ENCODE measurements at regions of chr5 and their contacts with region 1.

Region 1: DNA sequence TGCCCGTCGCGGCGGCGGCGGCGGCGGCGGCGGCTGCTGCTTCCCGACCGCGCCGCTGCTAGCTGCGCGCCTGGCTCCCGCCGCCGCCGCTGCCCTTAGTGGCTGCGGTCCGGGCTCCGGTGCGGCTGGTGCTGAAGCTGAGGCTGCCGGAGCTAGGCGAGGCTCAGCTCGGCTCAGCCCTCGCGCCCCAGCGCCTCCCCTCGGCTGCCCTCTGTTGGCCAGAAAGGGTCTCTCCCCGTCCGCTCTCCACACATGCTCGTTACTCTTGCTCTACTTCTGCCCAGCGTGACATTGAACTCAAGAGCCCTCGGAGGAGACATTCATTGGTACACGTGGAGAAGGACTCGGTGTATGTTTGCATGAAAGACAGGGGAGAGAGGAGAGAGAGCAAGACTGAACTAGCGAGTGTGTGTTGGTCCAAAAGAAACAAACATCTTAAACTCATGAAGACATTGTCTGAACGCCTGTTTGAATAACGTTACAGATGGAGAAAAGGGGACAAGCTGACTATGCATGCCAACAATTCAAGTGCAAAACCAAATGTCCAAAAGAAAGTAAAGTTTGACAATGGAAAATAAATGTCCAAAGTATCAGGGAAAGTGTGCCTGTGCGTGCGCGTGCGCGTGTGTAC is at the start of gene HCN1:
- DNase-seq: peak; percentile 52
- H3K4me3 ChIP-seq: no peak within 1 kb of the TSS
- H3K27ac ChIP-seq: no peak within 1 kb of the TSS
- H3K4me1 ChIP-seq: no peaks in the 10 kb centered on the region
- H3K27me3 ChIP-seq: peaks cover 5% of the 10 kb centered on the region
- CTCF ChIP-seq: peak; percentile 50 to 72
- total RNA-seq, gene HCN1: not detected

Region 2: DNA sequence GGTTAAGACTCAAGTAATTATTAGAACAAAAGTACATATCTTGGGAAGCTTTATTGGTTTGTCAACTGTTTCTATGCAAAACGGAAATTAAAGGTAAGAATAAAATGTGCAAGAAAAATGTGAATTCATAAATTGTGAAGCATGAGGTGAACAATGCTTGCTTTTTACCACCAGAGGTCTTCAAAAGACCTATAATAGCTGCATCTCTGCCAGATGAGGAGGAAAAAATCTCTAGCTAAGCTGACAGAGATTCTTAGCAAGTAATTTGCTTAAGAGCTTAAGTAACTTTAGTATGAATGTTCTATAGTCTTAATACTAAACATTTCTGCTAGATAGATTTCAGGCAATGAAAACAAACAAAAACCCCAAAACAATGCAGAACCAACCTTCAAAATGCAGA is 833.5 kb before region 1 on chr5:
- CTCF ChIA-PET with region 1: no interaction called
- dilution Hi-C with region 1: no loop called
- in situ Hi-C with region 1: no loop called
- intact Hi-C with region 1: loop called (anchors 2 kb)
- DNase-seq: peak; percentile 17
- H3K4me3 ChIP-seq: no peak overlapping the region
- H3K27ac ChIP-seq: no peak overlapping the region
- H3K4me1 ChIP-seq: peaks cover 11% of the 10 kb centered on the region
- H3K27me3 ChIP-seq: no peaks in the 10 kb centered on the region
- CTCF ChIP-seq: peak; percentile 51 to 61

Region 3: DNA sequence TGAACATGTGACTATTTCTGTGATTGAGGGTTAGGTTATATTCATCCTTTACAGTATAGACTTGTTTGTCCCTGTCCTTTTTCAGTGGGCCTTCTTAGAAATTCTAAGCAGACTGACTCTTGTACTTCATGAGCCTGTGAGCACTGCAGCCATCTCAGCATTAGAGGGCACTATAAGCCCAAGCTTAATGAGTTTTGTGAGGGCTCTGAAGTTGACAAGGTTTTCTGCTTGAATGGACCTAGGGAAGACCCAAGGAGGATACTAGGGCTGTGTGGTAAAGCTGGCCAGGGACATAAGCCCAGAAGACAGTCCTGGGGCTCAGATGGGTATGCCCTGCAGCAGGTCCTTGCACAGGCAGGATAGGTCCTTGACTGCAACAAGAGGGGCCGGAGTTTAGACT is 761.1 kb before region 1 on chr5:
- CTCF ChIA-PET with region 1: no interaction called
- dilution Hi-C with region 1: no loop called
- in situ Hi-C with region 1: no loop called
- intact Hi-C with region 1: loop called (anchors 5 kb)
- DNase-seq: peak; percentile 22
- H3K4me3 ChIP-seq: no peak overlapping the region
- H3K27ac ChIP-seq: no peak overlapping the region
- H3K4me1 ChIP-seq: no peaks in the 10 kb centered on the region
- H3K27me3 ChIP-seq: no peaks in the 10 kb centered on the region
- CTCF ChIP-seq: peak; percentile 31 to 51

Region 4: DNA sequence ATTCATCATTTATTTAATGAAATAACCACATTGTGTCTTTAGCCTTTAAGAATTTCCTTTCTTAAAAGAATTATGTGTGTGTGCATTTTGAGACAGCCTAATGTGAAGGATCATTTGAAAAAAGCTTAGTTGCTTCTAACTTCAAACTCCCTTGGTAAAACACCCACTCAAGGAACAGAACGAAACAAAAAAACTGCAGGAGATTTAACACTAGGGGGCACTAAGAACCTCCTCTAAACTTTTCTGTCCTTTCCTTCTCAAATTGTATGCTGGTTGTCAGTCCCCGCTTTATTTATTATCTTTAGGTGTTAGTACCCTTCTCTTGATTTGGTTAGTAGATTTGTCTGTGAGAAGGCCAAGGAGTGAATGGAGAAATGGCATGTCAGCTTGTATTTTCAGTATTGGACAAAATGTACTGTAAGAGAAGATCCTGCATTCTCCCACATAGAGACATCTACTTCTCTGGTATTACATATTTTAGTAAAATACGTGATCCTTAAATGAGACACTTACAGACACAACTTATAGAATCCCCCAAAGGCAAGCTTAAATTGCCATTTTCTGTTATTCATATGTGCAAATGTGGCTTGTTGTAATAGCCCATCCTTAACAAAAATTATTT is 657.8 kb before region 1 on chr5:
- CTCF ChIA-PET with region 1: no interaction called
- dilution Hi-C with region 1: no loop called
- in situ Hi-C with region 1: no loop called
- intact Hi-C with region 1: loop called (anchors 1 kb)
- DNase-seq: no peak
- H3K4me3 ChIP-seq: no peak overlapping the region
- H3K27ac ChIP-seq: no peak overlapping the region
- H3K4me1 ChIP-seq: no peaks in the 10 kb centered on the region
- H3K27me3 ChIP-seq: no peaks in the 10 kb centered on the region
- CTCF ChIP-seq: peak; percentile 37 to 62

Region 5: DNA sequence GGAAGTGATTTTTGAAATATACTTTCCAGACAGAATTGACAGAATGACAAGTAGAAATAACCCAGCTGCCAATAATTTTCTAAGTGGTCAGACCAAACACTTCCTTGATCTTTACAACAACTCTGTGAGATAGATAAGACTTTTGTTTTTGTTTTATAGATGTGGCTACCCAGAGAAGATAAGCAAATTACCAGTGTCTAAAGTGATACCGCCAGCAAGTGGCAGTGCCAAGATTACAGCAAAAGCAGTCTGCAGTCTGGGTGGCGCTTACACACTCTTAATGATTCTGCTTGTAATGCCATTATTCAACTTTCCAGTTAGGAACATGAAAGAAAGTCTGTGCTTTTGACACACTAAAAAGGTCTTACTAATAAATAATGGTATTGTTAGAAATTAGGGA is 92.2 kb before region 1 on chr5:
- CTCF ChIA-PET with region 1: no interaction called
- dilution Hi-C with region 1: no loop called
- in situ Hi-C with region 1: no loop called
- intact Hi-C with region 1: no loop called
- DNase-seq: no peak
- H3K4me3 ChIP-seq: no peak overlapping the region
- H3K27ac ChIP-seq: no peak overlapping the region
- H3K4me1 ChIP-seq: no peaks in the 10 kb centered on the region
- H3K27me3 ChIP-seq: no peaks in the 10 kb centered on the region
- CTCF ChIP-seq: no peak

Region 6: GRCh38 chr5:45774528-45774927 is 78.2 kb after region 1 on chr5:
- CTCF ChIA-PET with region 1: no interaction called
- dilution Hi-C with region 1: no loop called
- in situ Hi-C with region 1: no loop called
- intact Hi-C with region 1: no loop called
- DNase-seq: no peak
- H3K4me3 ChIP-seq: no peak overlapping the region
- H3K27ac ChIP-seq: no peak overlapping the region
- H3K4me1 ChIP-seq: no peaks in the 10 kb centered on the region
- H3K27me3 ChIP-seq: no peaks in the 10 kb centered on the region
- CTCF ChIP-seq: peak; percentile 7 to 11

Measured in mammary epithelial cell (primary cell).